Activated CD8-positive, alpha-beta T cell treated with anti-CD3 and anti-CD28 coated beads for 36 hours (primary cell): ENCODE measurements at regions of chr14 and their contacts with region 1.

Region 1: DNA sequence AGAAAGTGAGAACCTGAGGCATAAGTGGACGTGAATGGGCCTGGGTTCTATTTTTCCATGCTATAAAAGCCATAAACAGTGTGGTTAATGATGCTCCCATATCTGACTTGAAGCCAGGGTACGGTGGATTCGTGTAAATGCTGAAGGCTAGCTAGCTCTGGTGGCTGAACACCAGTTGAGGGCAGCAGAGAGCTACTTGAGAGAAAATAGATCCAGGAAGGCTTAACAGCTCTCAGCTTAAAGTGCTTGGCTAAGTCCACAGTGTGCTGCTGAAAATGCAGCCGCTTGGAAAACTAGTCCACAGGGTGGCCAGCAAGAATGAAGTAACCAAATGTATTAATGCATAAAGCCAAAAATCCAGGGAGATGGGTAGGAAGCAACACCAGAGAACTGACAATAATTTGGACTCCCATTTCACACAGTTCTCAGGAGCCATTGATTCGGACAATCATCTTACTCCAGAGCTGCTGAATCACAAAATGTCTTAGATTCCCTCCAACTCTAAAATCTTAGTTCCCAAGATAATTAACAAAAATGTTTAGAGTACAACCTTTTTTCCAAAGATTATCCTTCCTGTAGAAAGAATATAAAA is 15.0 kb upstream of the FOXG1 start:
- DNase-seq: peak; percentile 40
- ATAC-seq: no peak
- H3K4me3 Mint-ChIP-seq: no peak overlapping the region
- H3K27ac Mint-ChIP-seq: no peak overlapping the region
- H3K4me1 Mint-ChIP-seq: no peaks in the 10 kb centered on the region
- H3K27me3 Mint-ChIP-seq: peaks cover 31% of the 10 kb centered on the region
- CTCF ChIP-seq: peak; percentile 43

Region 2: GRCh38 chr14:28652811-28653221 is 98.7 kb before region 1 on chr14:
- CTCF ChIA-PET with region 1: no interaction called
- POLR2A ChIA-PET with region 1: no interaction called
- intact Hi-C with region 1: no loop called
- DNase-seq: no peak
- ATAC-seq: no peak
- H3K4me3 Mint-ChIP-seq: no peak overlapping the region
- H3K27ac Mint-ChIP-seq: no peak overlapping the region
- H3K4me1 Mint-ChIP-seq: no peaks in the 10 kb centered on the region
- H3K27me3 Mint-ChIP-seq: no peaks in the 10 kb centered on the region
- CTCF ChIP-seq: no peak

Region 3: GRCh38 chr14:28867571-28867970 is 116.0 kb after region 1 on chr14:
- CTCF ChIA-PET with region 1: no interaction called
- POLR2A ChIA-PET with region 1: no interaction called
- intact Hi-C with region 1: no loop called
- DNase-seq: no peak
- ATAC-seq: no peak
- H3K4me3 Mint-ChIP-seq: no peak overlapping the region
- H3K27ac Mint-ChIP-seq: no peak overlapping the region
- H3K4me1 Mint-ChIP-seq: no peaks in the 10 kb centered on the region
- H3K27me3 Mint-ChIP-seq: no peaks in the 10 kb centered on the region
- CTCF ChIP-seq: no peak

Region 4: DNA sequence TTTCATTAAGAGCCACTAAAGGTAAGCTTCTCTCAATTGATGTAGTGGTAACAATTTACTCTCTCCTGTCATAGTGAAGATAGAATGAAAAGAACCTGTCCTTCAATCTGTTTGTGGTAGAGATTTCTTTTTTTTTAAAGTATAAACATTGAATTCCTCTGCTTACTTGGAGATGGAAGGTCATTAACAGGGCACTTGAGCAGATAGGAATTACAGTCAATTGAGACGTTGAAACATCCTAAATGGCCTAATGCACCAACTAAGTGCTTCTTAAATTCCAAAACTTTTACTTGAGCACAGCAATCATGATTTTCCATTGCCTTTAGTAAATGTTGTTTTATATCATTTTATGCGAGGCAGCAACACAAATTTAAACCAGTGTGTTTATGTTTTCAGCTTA is 256.4 kb after region 1 on chr14:
- CTCF ChIA-PET with region 1: no interaction called
- POLR2A ChIA-PET with region 1: no interaction called
- intact Hi-C with region 1: no loop called
- DNase-seq: no peak
- ATAC-seq: no peak
- H3K4me3 Mint-ChIP-seq: no peak overlapping the region
- H3K27ac Mint-ChIP-seq: no peak overlapping the region
- H3K4me1 Mint-ChIP-seq: no peaks in the 10 kb centered on the region
- H3K27me3 Mint-ChIP-seq: no peaks in the 10 kb centered on the region
- CTCF ChIP-seq: no peak

Region 5: GRCh38 chr14:29536886-29537511 is 785.4 kb after region 1 on chr14:
- CTCF ChIA-PET with region 1: interaction called, 3 read pairs
- POLR2A ChIA-PET with region 1: no interaction called
- intact Hi-C with region 1: loop called (anchors 10 kb)
- DNase-seq: no peak
- ATAC-seq: no peak
- H3K4me3 Mint-ChIP-seq: no peak overlapping the region
- H3K27ac Mint-ChIP-seq: no peak overlapping the region
- H3K4me1 Mint-ChIP-seq: no peaks in the 10 kb centered on the region
- H3K27me3 Mint-ChIP-seq: no peaks in the 10 kb centered on the region
- CTCF ChIP-seq: no peak